Sciatic nerve (tissue), 2 donors: ENCODE measurements at regions of chr1 and their contacts with region 1.

Region 1: DNA sequence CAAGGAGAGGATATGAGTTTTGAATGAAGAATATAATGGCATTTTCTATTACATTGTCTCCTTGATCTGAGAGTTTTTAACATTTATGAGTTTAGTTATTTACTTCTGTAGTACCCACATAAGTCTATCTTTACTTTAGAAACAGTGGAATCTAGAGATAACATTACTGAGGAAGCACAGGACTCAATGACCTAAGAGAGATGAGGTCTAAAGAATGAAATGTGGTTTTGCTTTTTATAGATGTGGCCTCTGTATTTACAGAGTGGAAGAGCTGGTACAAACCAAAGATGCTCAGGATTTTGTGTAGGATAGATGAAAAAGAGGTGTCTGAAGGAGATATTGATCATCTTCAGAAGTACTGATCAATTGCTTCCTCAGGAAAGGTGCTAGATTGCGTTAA is 177.3 kb downstream of the KCTD3 start:
- DNase-seq: no peak
- ATAC-seq: no peak

Region 2: DNA sequence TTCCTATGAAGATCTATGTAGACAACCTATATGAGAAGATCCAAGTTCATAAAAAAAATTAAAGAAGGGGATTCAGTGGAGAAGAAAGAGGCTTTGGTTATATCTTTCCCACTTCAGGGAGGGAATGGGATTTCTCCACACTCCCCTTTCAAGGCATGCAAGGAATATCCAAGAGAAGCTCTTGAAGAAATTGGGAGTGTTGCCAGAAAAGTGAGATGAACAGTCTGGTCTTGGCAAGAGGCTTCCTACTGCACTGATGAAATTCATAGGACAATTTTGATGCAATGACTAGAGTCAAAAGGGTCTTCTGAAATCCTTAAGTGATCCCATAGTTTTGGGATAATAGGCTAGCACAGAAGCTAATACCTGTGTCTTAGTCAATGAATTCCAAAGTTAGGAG is 24.3 kb before region 1 on chr1:
- intact Hi-C with region 1: loop called (anchors 1 kb)
- DNase-seq: no peak
- ATAC-seq: no peak